Right lobe of liver (tissue), 6 donors: ENCODE measurements at regions of chr16 and their contacts with region 1.

Region 1: GRCh38 chr16:30519120-30520049 is 7.0 kb downstream of the ZNF768 start:
- DNase-seq: no peak
- ATAC-seq: no peak
- H3K4me3 ChIP-seq: no peak overlapping the region
- H3K27ac ChIP-seq: no peak overlapping the region
- H3K4me1 ChIP-seq: peaks cover 0 to 18% (median 8%) of the 10 kb centered on the region in 4 donors
- H3K27me3 ChIP-seq: no peaks in the 10 kb centered on the region
- CTCF ChIP-seq: no peak
- POLR2A ChIP-seq: no peak

Region 2: GRCh38 chr16:30458561-30459394 is 60.6 kb before region 1 on chr16:
- intact Hi-C with region 1: loop called in 1 of 2 experiments (anchors 10 kb)
- DNase-seq: peak in 2 of 3 donors; percentile 60 to 68
- ATAC-seq: peak; percentile 67 to 87 (median 74)
- H3K4me3 ChIP-seq: no peak overlapping the region
- H3K27ac ChIP-seq: no peak overlapping the region
- H3K4me1 ChIP-seq: no peaks in the 10 kb centered on the region
- H3K27me3 ChIP-seq: no peaks in the 10 kb centered on the region
- CTCF ChIP-seq: no peak
- POLR2A ChIP-seq: no peak